Endothelial cell of umbilical vein (primary cell): ENCODE measurements at regions of chr3 and their contacts with region 1.

Region 1: DNA sequence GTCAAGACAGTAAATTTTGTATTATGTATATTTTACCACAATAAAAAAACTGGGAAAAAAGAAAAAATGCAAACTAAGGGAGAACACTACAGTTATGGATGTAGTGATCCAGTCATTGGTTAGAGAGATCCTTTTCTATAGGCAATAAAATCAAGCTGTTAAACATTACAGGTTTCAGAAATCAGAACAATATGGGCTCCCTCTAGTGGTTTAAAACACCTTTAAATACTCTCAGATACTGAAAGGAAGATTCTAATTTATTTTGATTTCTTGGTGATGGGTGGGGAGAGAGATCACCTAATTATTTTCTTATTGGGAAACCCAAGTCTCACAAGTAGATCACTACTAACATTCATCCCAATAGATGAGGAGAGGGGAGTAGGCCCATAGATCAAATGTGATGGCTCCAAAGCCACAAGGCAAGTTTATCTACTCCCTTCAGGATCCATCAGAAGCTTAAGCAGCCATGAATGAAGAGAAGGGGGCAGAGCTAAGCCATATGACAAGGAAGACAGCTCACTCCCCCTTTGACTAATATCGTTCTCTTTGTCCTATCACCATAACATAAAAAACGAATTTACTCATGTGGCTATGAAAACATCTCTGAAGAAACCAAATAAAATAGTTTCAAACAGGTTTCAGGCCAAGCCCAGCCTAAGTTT is 118.6 kb downstream of the ANO10 start:
- DNase-seq: peak; percentile 67
- H3K4me3 ChIP-seq: no peak overlapping the region
- H3K27ac ChIP-seq: peak overlapping the region; percentile 58
- H3K4me1 ChIP-seq: peaks cover 39% of the 10 kb centered on the region
- H3K27me3 ChIP-seq: no peaks in the 10 kb centered on the region
- CTCF ChIP-seq: peak; percentile 20 to 33
- POLR2A ChIP-seq: no peak

Region 2: GRCh38 chr3:43162230-43163084 is 340.7 kb before region 1 on chr3:
- CTCF ChIA-PET with region 1: interaction called, 63 read pairs
- POLR2A ChIA-PET with region 1: no interaction called
- dilution Hi-C with region 1: no loop called
- intact Hi-C with region 1: loop called (anchors 1 kb)
- DNase-seq: peak; percentile 86
- H3K4me3 ChIP-seq: no peak overlapping the region
- H3K27ac ChIP-seq: peak overlapping the region; percentile 65
- H3K4me1 ChIP-seq: peaks cover 12% of the 10 kb centered on the region
- H3K27me3 ChIP-seq: no peaks in the 10 kb centered on the region
- CTCF ChIP-seq: peak; percentile 33 to 36
- POLR2A ChIP-seq: no peak

Region 3: GRCh38 chr3:43302116-43302880 is 200.9 kb before region 1 on chr3:
- CTCF ChIA-PET with region 1: interaction called, 15 read pairs
- POLR2A ChIA-PET with region 1: interaction called, 3 read pairs
- dilution Hi-C with region 1: no loop called
- intact Hi-C with region 1: no loop called
- DNase-seq: no peak
- H3K4me3 ChIP-seq: no peak overlapping the region
- H3K27ac ChIP-seq: no peak overlapping the region
- H3K4me1 ChIP-seq: peaks cover 6% of the 10 kb centered on the region
- H3K27me3 ChIP-seq: no peaks in the 10 kb centered on the region
- CTCF ChIP-seq: no peak
- POLR2A ChIP-seq: no peak

Region 4: GRCh38 chr3:43345877-43346276 is 157.3 kb before region 1 on chr3:
- CTCF ChIA-PET with region 1: interaction called, 26 read pairs
- POLR2A ChIA-PET with region 1: no interaction called
- dilution Hi-C with region 1: no loop called
- intact Hi-C with region 1: no loop called
- DNase-seq: no peak
- H3K4me3 ChIP-seq: no peak overlapping the region
- H3K27ac ChIP-seq: no peak overlapping the region
- H3K4me1 ChIP-seq: peaks cover 7% of the 10 kb centered on the region
- H3K27me3 ChIP-seq: no peaks in the 10 kb centered on the region
- CTCF ChIP-seq: no peak
- POLR2A ChIP-seq: no peak

Region 5: DNA sequence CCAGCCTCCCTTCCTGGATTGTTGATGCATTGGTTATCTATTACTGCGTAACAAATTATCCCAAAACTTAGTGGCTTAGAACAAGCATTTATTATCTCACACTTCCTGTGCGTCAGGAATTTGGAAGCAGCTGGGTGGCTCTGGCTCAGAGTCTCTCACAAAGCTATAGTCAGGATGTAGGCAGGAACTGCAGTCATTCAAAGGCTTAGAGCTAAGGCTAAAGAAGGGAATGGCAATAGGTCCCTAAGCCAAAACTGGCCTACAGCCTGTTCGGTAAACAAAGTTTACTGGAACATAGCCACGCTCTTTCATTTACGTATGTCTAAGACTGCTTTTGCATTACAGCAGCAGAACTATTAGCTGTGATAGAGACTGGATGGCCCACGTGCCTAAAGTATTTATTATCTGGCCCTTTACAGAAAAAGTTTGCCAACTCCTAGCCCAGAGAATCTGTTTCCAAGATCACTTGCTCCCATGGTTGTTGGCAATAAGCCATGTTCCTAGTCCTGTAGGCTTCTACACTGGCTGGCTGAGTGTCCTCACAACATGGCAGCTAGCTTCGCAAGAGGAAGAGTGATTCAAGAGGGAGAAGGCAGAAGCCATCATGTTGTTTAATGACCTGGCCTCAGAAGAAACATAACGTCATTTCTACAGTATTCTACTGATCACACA is 84.5 kb before region 1 on chr3:
- CTCF ChIA-PET with region 1: interaction called, 10 read pairs
- POLR2A ChIA-PET with region 1: no interaction called
- dilution Hi-C with region 1: no loop called
- intact Hi-C with region 1: no loop called
- DNase-seq: peak; percentile 88
- H3K4me3 ChIP-seq: no peak overlapping the region
- H3K27ac ChIP-seq: peak overlapping the region; percentile 77
- H3K4me1 ChIP-seq: peaks cover 26% of the 10 kb centered on the region
- H3K27me3 ChIP-seq: no peaks in the 10 kb centered on the region
- CTCF ChIP-seq: no peak
- POLR2A ChIP-seq: no peak

Region 6: GRCh38 chr3:43477600-43477999 is 25.6 kb before region 1 on chr3:
- CTCF ChIA-PET with region 1: interaction called, 21 read pairs
- POLR2A ChIA-PET with region 1: no interaction called
- dilution Hi-C with region 1: no loop called
- intact Hi-C with region 1: no loop called
- DNase-seq: peak; percentile 59
- H3K4me3 ChIP-seq: no peak overlapping the region
- H3K27ac ChIP-seq: peak overlapping the region; percentile 79
- H3K4me1 ChIP-seq: peaks cover 25% of the 10 kb centered on the region
- H3K27me3 ChIP-seq: no peaks in the 10 kb centered on the region
- CTCF ChIP-seq: no peak
- POLR2A ChIP-seq: no peak

Region 7: GRCh38 chr3:44120721-44121582 is 617.8 kb after region 1 on chr3:
- CTCF ChIA-PET with region 1: no interaction called
- POLR2A ChIA-PET with region 1: no interaction called
- dilution Hi-C with region 1: no loop called
- intact Hi-C with region 1: no loop called
- DNase-seq: no peak
- H3K4me3 ChIP-seq: no peak overlapping the region
- H3K27ac ChIP-seq: no peak overlapping the region
- H3K4me1 ChIP-seq: no peaks in the 10 kb centered on the region
- H3K27me3 ChIP-seq: peaks cover 0 to 4% of the 10 kb centered on the region in 2 experiments
- CTCF ChIP-seq: no peak
- POLR2A ChIP-seq: no peak

Region 8: GRCh38 chr3:44184319-44184953 is 681.2 kb after region 1 on chr3:
- CTCF ChIA-PET with region 1: no interaction called
- POLR2A ChIA-PET with region 1: no interaction called
- dilution Hi-C with region 1: no loop called
- intact Hi-C with region 1: no loop called
- DNase-seq: no peak
- H3K4me3 ChIP-seq: no peak overlapping the region
- H3K27ac ChIP-seq: no peak overlapping the region
- H3K4me1 ChIP-seq: no peaks in the 10 kb centered on the region
- H3K27me3 ChIP-seq: peaks cover 2 to 3% of the 10 kb centered on the region in 2 experiments
- CTCF ChIP-seq: no peak
- POLR2A ChIP-seq: no peak

Region 9: GRCh38 chr3:44198284-44199269 is 695.4 kb after region 1 on chr3:
- CTCF ChIA-PET with region 1: interaction called, 9 read pairs
- POLR2A ChIA-PET with region 1: no interaction called
- dilution Hi-C with region 1: no loop called
- intact Hi-C with region 1: loop called (anchors 5 kb)
- DNase-seq: peak; percentile 69
- H3K4me3 ChIP-seq: no peak overlapping the region
- H3K27ac ChIP-seq: no peak overlapping the region
- H3K4me1 ChIP-seq: no peaks in the 10 kb centered on the region
- H3K27me3 ChIP-seq: peaks cover 2 to 3% of the 10 kb centered on the region in 2 experiments
- CTCF ChIP-seq: peak; percentile 72 to 83
- POLR2A ChIP-seq: no peak